Kidney (tissue), 22 donors: ENCODE measurements at regions of chr11 and their contacts with region 1.

Region 1: GRCh38 chr11:57249384-57250319 is 12.6 kb upstream of the APLNR start:
- DNase-seq: peak in 4 of 5 donors; percentile 60 to 79 (median 68)
- H3K4me3 ChIP-seq: no peak overlapping the region
- H3K27ac ChIP-seq: no peak overlapping the region
- H3K4me1 ChIP-seq: peaks cover 0 to 2% (median 0%) of the 10 kb centered on the region in 3 donors
- H3K27me3 ChIP-seq: no peaks in the 10 kb centered on the region
- CTCF ChIP-seq: peak; percentile 81

Region 2: DNA sequence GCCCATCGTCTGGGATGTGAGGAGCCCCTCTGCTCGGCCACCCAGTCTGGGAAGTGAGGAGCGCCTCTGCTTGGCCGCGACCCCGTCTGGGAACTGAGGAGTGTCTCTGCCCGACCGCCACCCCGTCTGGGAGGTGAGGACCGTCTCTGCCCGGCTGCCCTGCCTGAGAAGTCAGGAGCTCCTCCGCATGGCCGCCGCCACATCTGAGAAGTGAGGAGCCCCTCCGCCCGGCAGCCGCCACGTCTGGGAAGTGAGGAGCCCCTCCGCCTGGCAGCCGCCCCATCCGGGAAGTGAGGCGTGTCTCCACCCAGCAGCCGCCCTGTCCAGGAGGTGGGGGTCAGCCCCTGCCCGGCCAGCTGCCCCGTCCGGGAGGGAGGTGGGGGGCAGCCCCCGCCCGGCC is 752.6 kb before region 1 on chr11:
- intact Hi-C with region 1: no loop called
- DNase-seq: peak in 1 of 5 donors; percentile 70
- H3K4me3 ChIP-seq: no peak overlapping the region
- H3K27ac ChIP-seq: no peak overlapping the region
- H3K4me1 ChIP-seq: no peaks in the 10 kb centered on the region
- H3K27me3 ChIP-seq: no peaks in the 10 kb centered on the region
- CTCF ChIP-seq: no peak

Region 3: GRCh38 chr11:56841210-56841810 is 408.3 kb before region 1 on chr11:
- intact Hi-C with region 1: loop called (anchors 5 kb)
- DNase-seq: peak in 4 of 5 donors; percentile 58 to 83 (median 70)
- H3K4me3 ChIP-seq: no peak overlapping the region
- H3K27ac ChIP-seq: no peak overlapping the region
- H3K4me1 ChIP-seq: peaks cover 0 to 4% (median 0%) of the 10 kb centered on the region in 3 donors
- H3K27me3 ChIP-seq: no peaks in the 10 kb centered on the region
- CTCF ChIP-seq: peak; percentile 75

Region 4: GRCh38 chr11:56910785-56911184 is 338.9 kb before region 1 on chr11:
- intact Hi-C with region 1: no loop called
- DNase-seq: no peak
- H3K4me3 ChIP-seq: no peak overlapping the region
- H3K27ac ChIP-seq: no peak overlapping the region
- H3K4me1 ChIP-seq: no peaks in the 10 kb centered on the region
- H3K27me3 ChIP-seq: no peaks in the 10 kb centered on the region
- CTCF ChIP-seq: no peak

Region 5: GRCh38 chr11:56961609-56962008 is 288.0 kb before region 1 on chr11:
- intact Hi-C with region 1: no loop called
- DNase-seq: no peak
- H3K4me3 ChIP-seq: no peak overlapping the region
- H3K27ac ChIP-seq: no peak overlapping the region
- H3K4me1 ChIP-seq: no peaks in the 10 kb centered on the region
- H3K27me3 ChIP-seq: no peaks in the 10 kb centered on the region
- CTCF ChIP-seq: no peak

Region 6: DNA sequence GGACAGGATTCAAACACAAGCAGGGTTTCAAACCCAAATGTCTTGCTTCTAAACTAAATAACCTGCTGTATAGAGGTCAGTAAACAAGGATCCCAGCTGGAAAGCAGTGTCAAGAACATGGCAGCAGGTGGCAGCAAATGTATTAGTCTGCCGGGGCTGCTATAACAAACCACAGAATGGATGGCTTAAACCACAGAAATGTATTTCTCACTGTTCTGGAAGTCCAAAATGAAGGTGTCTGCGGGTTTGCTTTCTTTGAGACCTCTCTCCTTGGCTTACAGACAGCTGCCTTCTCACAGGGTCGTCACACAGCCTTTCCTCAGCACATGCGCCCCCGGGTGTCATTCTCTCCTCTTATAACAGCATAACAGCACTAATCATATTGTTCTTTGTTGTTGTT is 133.0 kb before region 1 on chr11:
- intact Hi-C with region 1: loop called (anchors 5 kb)
- DNase-seq: peak in 3 of 5 donors; percentile 14 to 34 (median 23)
- H3K4me3 ChIP-seq: no peak overlapping the region
- H3K27ac ChIP-seq: no peak overlapping the region
- H3K4me1 ChIP-seq: no peaks in the 10 kb centered on the region
- H3K27me3 ChIP-seq: no peaks in the 10 kb centered on the region
- CTCF ChIP-seq: peak; percentile 45